ENCODE measurements at regions of chr4 and their contacts with region 1.

Region 1: DNA sequence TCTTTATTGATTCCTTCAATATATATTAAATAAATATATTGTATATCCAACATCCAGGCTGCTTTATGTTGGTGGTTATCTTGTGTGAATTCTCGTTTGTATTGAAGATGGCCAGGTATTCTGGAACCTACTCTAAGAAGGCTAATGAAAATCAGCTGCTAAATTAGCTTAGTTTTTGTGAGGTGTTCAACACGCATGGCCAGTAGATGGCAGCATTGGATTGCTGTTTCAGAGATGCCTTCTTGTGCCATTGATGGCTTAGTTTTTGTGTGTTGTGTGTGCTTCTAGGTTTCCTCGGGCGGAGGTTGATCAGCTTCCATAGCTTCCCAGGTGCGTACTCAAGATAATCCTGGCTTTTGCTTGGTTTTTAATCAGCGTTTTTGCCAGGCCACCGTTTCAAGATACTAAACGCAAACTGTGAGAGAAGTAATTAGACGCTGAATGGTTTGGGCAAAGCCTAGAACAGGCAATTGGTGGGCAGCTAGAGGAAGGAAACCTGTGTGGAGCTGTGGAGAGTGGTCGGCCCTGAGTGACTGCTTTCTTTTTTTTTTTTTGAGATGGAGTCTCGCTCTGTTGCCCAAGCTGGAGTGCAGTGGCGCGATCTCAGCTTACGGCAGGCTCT is 15.1 kb downstream of the NOCT start:
- DNase-seq: peak; percentile 60 to 91 (median 68)
- ATAC-seq: peak; percentile 86
- H3K4me3 ChIP-seq: no peak overlapping the region
- H3K4me3 Mint-ChIP-seq: no peak overlapping the region
- H3K27ac ChIP-seq: no peak overlapping the region
- H3K27ac Mint-ChIP-seq: no peak overlapping the region
- H3K4me1 ChIP-seq: peaks cover 5% of the 10 kb centered on the region
- H3K4me1 Mint-ChIP-seq: peaks cover 16% of the 10 kb centered on the region
- H3K27me3 ChIP-seq: no peaks in the 10 kb centered on the region
- H3K27me3 Mint-ChIP-seq: no peaks in the 10 kb centered on the region
- CTCF ChIP-seq: peak; percentile 88

Region 2: GRCh38 chr4:139042981-139043460 is 12.3 kb after region 1 on chr4:
- CTCF ChIA-PET with region 1: interaction called, 14 read pairs
- POLR2A ChIA-PET with region 1: no interaction called
- intact Hi-C with region 1: no loop called
- DNase-seq: no peak
- ATAC-seq: no peak
- H3K4me3 ChIP-seq: no peak overlapping the region
- H3K4me3 Mint-ChIP-seq: no peak overlapping the region
- H3K27ac ChIP-seq: no peak overlapping the region
- H3K27ac Mint-ChIP-seq: no peak overlapping the region
- H3K4me1 ChIP-seq: no peaks in the 10 kb centered on the region
- H3K4me1 Mint-ChIP-seq: peaks cover 4% of the 10 kb centered on the region
- H3K27me3 ChIP-seq: no peaks in the 10 kb centered on the region
- H3K27me3 Mint-ChIP-seq: no peaks in the 10 kb centered on the region
- CTCF ChIP-seq: no peak

Region 3: GRCh38 chr4:139083956-139084803 is 53.5 kb after region 1 on chr4:
- CTCF ChIA-PET with region 1: interaction called, 16 read pairs
- POLR2A ChIA-PET with region 1: interaction called, 10 read pairs
- intact Hi-C with region 1: loop called (anchors 1 to 2 kb)
- DNase-seq: peak; percentile 65 to 94 (median 80)
- ATAC-seq: peak; percentile 44
- H3K4me3 ChIP-seq: peak overlapping the region; percentile 93
- H3K4me3 Mint-ChIP-seq: peak overlapping the region; percentile 93
- H3K27ac ChIP-seq: peak overlapping the region; percentile 94 to 96
- H3K27ac Mint-ChIP-seq: peak overlapping the region; percentile 92
- H3K4me1 ChIP-seq: peaks cover 5% of the 10 kb centered on the region
- H3K4me1 Mint-ChIP-seq: peaks cover 55% of the 10 kb centered on the region
- H3K27me3 ChIP-seq: no peaks in the 10 kb centered on the region
- H3K27me3 Mint-ChIP-seq: no peaks in the 10 kb centered on the region
- CTCF ChIP-seq: no peak

Region 4: DNA sequence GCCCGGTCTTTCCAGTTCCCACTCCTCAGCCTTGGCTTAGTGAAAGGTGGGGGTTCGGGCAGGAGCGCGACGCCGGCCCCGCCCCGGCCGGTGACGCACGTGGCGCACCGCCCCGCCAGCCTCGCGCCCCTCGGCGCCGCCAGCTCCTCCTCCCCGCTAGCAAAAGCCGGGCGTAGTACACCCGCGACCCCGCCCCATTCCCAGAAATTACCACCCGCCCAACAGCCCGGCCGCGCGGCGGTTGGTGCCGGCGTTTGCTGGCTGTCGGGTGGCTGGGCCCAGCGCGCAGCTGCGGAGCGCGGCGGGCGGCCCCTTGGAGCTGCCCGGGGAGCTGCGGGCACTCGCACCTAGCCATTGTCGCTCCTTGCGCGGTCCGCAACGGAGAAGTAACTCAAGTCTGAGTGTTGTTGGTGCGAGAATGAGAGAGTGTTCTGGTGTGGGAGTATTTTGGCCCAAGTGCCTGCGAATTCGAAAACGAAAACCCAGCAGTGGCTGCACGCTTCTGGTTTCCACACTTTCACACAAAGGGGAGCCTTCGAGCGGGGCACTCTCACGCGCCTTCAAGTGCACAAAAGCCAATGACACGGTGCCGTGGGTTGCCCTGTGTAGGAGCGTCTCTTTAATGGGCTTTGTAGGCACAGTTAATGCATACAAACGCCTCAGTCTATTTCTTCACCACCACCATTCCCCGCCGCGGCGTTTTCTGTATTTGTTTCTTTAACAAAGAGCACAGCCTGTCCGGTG is 147.3 kb after region 1 on chr4:
- CTCF ChIA-PET with region 1: no interaction called
- POLR2A ChIA-PET with region 1: interaction called, 4 read pairs
- intact Hi-C with region 1: loop called (anchors 5 kb)
- DNase-seq: peak; percentile 80 to 96 (median 90)
- ATAC-seq: peak; percentile 74
- H3K4me3 ChIP-seq: peak overlapping the region; percentile 85
- H3K4me3 Mint-ChIP-seq: peak overlapping the region; percentile 96
- H3K27ac ChIP-seq: peak overlapping the region; percentile 77 to 88
- H3K27ac Mint-ChIP-seq: peak overlapping the region; percentile 93
- H3K4me1 ChIP-seq: peaks cover 18% of the 10 kb centered on the region
- H3K4me1 Mint-ChIP-seq: peaks cover 26% of the 10 kb centered on the region
- H3K27me3 ChIP-seq: no peaks in the 10 kb centered on the region
- H3K27me3 Mint-ChIP-seq: no peaks in the 10 kb centered on the region
- CTCF ChIP-seq: no peak

Region 5: GRCh38 chr4:139295206-139295941 is 264.6 kb after region 1 on chr4:
- CTCF ChIA-PET with region 1: interaction called, 13 read pairs
- POLR2A ChIA-PET with region 1: interaction called, 17 read pairs
- intact Hi-C with region 1: loop called (anchors 2 to 5 kb)
- DNase-seq: peak; percentile 95 to 100 (median 98)
- ATAC-seq: peak; percentile 92
- H3K4me3 ChIP-seq: peak overlapping the region; percentile 94
- H3K4me3 Mint-ChIP-seq: peak overlapping the region; percentile 96
- H3K27ac ChIP-seq: peak overlapping the region; percentile 77 to 84
- H3K27ac Mint-ChIP-seq: peak overlapping the region; percentile 92
- H3K4me1 ChIP-seq: peaks cover 15% of the 10 kb centered on the region
- H3K4me1 Mint-ChIP-seq: peaks cover 33% of the 10 kb centered on the region
- H3K27me3 ChIP-seq: no peaks in the 10 kb centered on the region
- H3K27me3 Mint-ChIP-seq: no peaks in the 10 kb centered on the region
- CTCF ChIP-seq: peak; percentile 87

Region 6: DNA sequence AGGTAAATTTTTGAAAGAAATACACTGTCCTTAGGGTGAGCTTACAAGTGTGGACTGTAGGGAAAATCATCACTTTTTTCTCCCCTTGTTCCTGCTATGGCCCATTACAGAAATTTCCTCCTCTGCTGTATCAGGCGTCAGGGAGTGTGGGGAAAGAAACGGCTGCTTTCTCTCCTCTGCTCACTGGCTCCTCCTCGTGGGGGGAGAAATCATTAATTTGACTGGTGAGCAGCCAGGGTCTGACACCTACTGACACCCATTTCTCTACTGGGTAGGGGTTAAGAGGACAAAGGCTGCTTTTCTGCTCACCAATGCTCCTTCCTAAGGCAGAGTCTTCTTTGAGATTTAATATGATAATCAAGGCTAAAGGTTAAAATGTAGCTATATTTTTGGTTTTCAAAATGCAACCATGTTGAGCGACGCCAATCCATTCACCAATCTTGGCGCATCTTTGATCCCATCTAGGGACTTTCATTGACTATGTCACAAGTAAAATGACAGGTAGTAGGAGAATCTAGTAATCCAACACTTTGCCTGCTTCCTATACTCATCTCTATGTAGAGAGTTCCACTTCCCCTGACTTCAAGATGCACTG is 500.2 kb after region 1 on chr4:
- CTCF ChIA-PET with region 1: interaction called, 4 read pairs
- POLR2A ChIA-PET with region 1: no interaction called
- intact Hi-C with region 1: loop called (anchors 2 kb)
- DNase-seq: peak; percentile 40 to 75 (median 53)
- ATAC-seq: peak; percentile 84
- H3K4me3 ChIP-seq: no peak overlapping the region
- H3K4me3 Mint-ChIP-seq: no peak overlapping the region
- H3K27ac ChIP-seq: no peak overlapping the region
- H3K27ac Mint-ChIP-seq: no peak overlapping the region
- H3K4me1 ChIP-seq: peaks cover 9% of the 10 kb centered on the region
- H3K4me1 Mint-ChIP-seq: peaks cover 5% of the 10 kb centered on the region
- H3K27me3 ChIP-seq: no peaks in the 10 kb centered on the region
- H3K27me3 Mint-ChIP-seq: no peaks in the 10 kb centered on the region
- CTCF ChIP-seq: peak; percentile 76

Region 7: GRCh38 chr4:140252742-140253555 is 1222.2 kb after region 1 on chr4:
- CTCF ChIA-PET with region 1: no interaction called
- POLR2A ChIA-PET with region 1: no interaction called
- intact Hi-C with region 1: loop called in 1 of 2 experiments (anchors 5 kb)
- DNase-seq: peak; percentile 24 to 82 (median 56)
- ATAC-seq: peak; percentile 75
- H3K4me3 ChIP-seq: peak overlapping the region; percentile 59
- H3K4me3 Mint-ChIP-seq: peak overlapping the region; percentile 87
- H3K27ac ChIP-seq: no peak overlapping the region
- H3K27ac Mint-ChIP-seq: no peak overlapping the region
- H3K4me1 ChIP-seq: peaks cover 7% of the 10 kb centered on the region
- H3K4me1 Mint-ChIP-seq: peaks cover 16% of the 10 kb centered on the region
- H3K27me3 ChIP-seq: peaks cover 8 to 9% of the 10 kb centered on the region in 2 experiments
- H3K27me3 Mint-ChIP-seq: peaks cover 13% of the 10 kb centered on the region
- CTCF ChIP-seq: peak; percentile 94

Measured in CD4-positive, alpha-beta T cell (primary cell).